Lower leg skin (tissue), 4 donors: ENCODE measurements at regions of chr15 and their contacts with region 1.

Region 1: GRCh38 chr15:25378501-25378901 is 60.3 kb downstream of the UBE3A start:
- DNase-seq: no peak
- H3K4me3 ChIP-seq: no peak overlapping the region
- CTCF ChIP-seq: no peak
- POLR2A ChIP-seq: no peak

Region 2: GRCh38 chr15:25493823-25494526 is 115.5 kb after region 1 on chr15:
- intact Hi-C with region 1: no loop called
- DNase-seq: no peak
- H3K4me3 ChIP-seq: no peak overlapping the region
- CTCF ChIP-seq: no peak
- POLR2A ChIP-seq: no peak

Region 3: GRCh38 chr15:26773069-26773877 is 1394.8 kb after region 1 on chr15:
- intact Hi-C with region 1: loop called (anchors 5 kb)
- DNase-seq: no peak
- H3K4me3 ChIP-seq: no peak overlapping the region
- CTCF ChIP-seq: no peak
- POLR2A ChIP-seq: no peak